Colonic mucosa (tissue), 4 donors: ENCODE measurements at regions of chr6 and their contacts with region 1.

Region 1: GRCh38 chr6:35297601-35298481 is at the start of gene DEF6:
- DNase-seq: peak; percentile 85
- H3K4me3 ChIP-seq: peak within 1 kb of the TSS; percentile 46
- H3K27ac ChIP-seq: peak within 1 kb of the TSS; percentile 67
- H3K4me1 ChIP-seq: peaks cover 4% of the 10 kb centered on the region
- H3K27me3 ChIP-seq: no peaks in the 10 kb centered on the region
- CTCF ChIP-seq: peak; percentile 83
- total RNA-seq, gene DEF6: 8.1 to 12.5 TPM

Region 2: DNA sequence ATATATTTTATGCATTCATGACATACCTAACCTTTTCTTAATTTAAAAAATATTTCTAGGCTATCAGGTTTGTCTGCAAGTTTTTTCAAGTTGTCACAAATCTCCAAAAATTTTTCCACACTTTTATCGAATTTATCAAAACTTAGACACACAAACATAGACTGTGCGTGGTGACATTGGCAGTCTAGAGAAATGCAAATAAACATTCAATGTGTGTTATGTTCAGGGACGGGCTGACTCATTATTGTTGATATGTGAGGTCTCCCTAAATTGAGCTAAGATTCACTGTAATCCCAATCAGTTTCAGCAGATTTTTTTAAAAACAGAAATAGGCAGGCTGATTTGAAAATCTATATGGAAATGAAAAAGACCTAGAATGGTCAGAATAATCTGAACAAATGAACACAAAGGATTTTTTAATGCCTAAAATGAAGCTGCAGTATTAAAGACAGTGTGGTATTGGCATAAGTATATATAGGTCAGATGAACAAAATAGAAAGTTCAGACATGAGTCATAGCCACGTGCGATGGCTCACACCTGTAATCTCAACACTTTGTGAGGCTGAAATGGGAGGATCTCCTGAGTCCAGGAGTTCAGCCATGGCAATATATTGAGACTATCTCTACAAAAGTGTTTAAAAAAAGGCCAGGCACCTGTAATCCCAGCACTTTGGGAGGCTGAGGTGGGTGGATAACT is 486.8 kb before region 1 on chr6:
- intact Hi-C with region 1: no loop called
- DNase-seq: peak; percentile 22
- H3K4me3 ChIP-seq: no peak overlapping the region
- H3K27ac ChIP-seq: no peak overlapping the region
- H3K4me1 ChIP-seq: no peaks in the 10 kb centered on the region
- H3K27me3 ChIP-seq: no peaks in the 10 kb centered on the region
- CTCF ChIP-seq: no peak

Region 3: GRCh38 chr6:35342258-35343091 is 44.6 kb after region 1 on chr6 and contains the start of gene PPARD:
- intact Hi-C with region 1: loop called (anchors 5 kb)
- DNase-seq: peak; percentile 100
- H3K4me3 ChIP-seq: peak within 1 kb of the TSS; percentile 99
- H3K27ac ChIP-seq: peak within 1 kb of the TSS; percentile 80
- H3K4me1 ChIP-seq: peaks cover 7% of the 10 kb centered on the region
- H3K27me3 ChIP-seq: no peaks in the 10 kb centered on the region
- CTCF ChIP-seq: peak; percentile 92
- total RNA-seq, gene PPARD: 38.1 to 41.8 TPM

Region 4: GRCh38 chr6:35359751-35360348 is 62.0 kb after region 1 on chr6:
- intact Hi-C with region 1: no loop called
- DNase-seq: no peak
- H3K4me3 ChIP-seq: no peak overlapping the region
- H3K27ac ChIP-seq: no peak overlapping the region
- H3K4me1 ChIP-seq: no peaks in the 10 kb centered on the region
- H3K27me3 ChIP-seq: no peaks in the 10 kb centered on the region
- CTCF ChIP-seq: no peak

Region 5: DNA sequence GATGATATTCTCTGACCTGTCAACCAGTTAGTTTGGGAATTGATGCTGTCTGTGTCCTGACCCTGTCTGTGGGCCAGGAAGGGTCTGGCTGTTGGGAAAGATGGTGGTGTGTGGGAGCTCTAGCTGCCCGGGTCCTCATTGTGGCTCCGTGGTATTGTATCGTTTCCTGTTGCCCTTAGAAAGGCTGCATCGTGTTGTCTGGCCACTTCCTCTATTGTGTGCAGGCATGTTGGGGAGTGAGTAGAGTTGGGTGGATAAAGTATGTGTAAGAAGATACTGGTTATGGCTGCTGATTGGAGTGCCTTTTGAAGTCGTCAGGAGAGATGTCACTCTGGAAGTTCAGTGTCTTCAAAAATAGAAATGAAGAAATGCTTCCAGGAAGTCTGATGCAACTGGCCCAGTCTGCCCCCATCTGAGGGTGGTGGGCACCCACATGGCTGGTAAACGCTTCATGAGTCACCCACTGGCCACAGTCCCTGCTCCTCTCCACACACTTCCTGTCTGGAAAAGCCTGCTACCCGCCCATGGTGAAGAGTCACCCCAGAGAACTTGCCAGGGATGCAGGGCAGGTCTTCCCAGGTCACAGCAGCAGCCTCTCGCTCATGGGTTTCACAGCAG is 72.4 kb after region 1 on chr6:
- intact Hi-C with region 1: no loop called
- DNase-seq: peak; percentile 37
- H3K4me3 ChIP-seq: no peak overlapping the region
- H3K27ac ChIP-seq: peak overlapping the region; percentile 2
- H3K4me1 ChIP-seq: no peaks in the 10 kb centered on the region
- H3K27me3 ChIP-seq: no peaks in the 10 kb centered on the region
- CTCF ChIP-seq: no peak

Region 6: DNA sequence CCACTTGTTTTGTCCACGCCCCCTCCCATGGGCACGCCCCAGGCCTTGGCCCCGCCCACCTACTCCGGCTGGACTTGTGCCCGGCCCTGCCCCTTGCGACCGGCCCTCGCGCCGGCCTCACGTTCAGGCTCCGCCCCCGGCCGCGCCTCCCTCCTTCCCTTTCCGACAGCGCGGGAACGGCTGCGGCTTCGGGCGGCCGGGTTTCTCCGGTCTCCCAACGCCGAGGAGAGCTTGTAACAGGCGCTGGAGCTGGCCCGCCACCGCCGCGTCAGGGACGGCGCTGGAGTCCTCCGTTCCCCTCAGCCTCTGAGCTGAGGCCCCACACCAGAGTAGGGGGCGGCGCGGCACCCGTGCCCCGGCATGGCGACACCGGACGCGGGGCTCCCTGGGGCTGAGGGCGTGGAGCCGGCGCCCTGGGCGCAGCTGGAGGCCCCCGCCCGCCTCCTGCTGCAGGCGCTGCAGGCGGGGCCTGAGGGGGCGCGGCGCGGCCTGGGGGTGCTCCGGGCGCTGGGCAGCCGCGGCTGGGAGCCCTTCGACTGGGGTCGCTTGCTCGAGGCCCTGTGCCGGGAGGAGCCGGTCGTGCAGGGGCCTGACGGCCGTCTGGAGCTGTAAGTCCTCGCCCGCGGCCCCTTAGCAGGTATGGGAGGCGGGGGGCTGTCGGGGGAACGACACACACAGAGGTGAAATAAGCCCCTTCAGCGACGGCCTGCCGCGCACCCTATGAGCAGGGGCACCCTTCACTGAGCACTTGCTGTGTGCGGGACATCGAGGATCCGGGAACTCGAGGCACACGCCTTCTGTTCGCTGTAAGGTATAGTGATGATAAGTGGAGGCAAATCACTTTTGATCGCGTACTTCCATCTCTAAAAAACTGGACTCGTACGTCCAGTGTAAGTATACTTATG is 154.6 kb after region 1 on chr6 and contains the start of gene FANCE:
- intact Hi-C with region 1: loop called (anchors 5 kb)
- DNase-seq: peak; percentile 99
- H3K4me3 ChIP-seq: peak within 1 kb of the TSS; percentile 74
- H3K27ac ChIP-seq: peak within 1 kb of the TSS; percentile 72
- H3K4me1 ChIP-seq: peaks cover 6% of the 10 kb centered on the region
- H3K27me3 ChIP-seq: no peaks in the 10 kb centered on the region
- CTCF ChIP-seq: no peak
- total RNA-seq, gene FANCE: 3.7 to 10.7 TPM